ENCODE measurements at regions of chr6 and their contacts with region 1.

Region 1: GRCh38 chr6:77492530-77492929 is 29.2 kb upstream of the HTR1B start:
- DNase-seq: no peak
- ATAC-seq: no peak
- H3K4me3 ChIP-seq: no peak overlapping the region
- H3K27ac ChIP-seq: no peak overlapping the region
- H3K4me1 ChIP-seq: no peaks in the 10 kb centered on the region
- H3K27me3 ChIP-seq: no peaks in the 10 kb centered on the region
- CTCF ChIP-seq: no peak
- EP300 ChIP-seq: no peak
- POLR2A ChIP-seq: no peak
- RAD21 ChIP-seq: no peak

Region 2: DNA sequence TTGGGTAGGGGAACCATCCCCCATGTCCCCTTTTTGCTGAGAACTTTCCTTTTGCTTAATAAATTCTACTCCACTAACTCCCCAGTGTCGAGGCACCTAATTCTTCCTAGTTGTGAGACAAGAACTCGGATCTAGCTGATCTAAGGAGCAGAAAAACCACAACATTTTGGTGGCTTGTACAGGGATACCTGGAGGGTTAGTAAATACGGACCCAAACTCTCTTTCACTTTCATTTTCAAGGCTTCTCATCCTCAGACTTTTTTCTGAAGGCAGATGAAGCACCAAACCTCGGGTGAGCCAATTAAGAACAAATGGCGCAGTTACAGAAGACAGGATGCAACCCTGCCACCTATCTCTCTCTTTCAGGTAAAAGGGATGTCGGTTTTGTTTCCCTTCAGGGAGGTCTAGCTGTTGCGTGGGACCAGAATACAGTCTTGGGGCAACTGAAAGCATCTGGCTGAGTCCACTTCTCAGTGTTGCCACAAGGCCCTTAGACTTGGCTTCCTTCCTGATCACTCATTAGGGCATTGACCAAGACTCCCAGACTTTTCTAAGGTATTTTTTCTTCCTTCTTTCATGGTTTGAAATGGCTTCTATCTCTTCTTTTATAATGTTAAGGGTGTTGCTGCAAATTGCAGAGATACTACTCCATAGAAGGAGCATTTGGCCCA is 18.1 kb before region 1 on chr6:
- CTCF ChIA-PET with region 1: interaction called, 5 read pairs
- POLR2A ChIA-PET with region 1: interaction called, 4 read pairs
- RAD21 ChIA-PET with region 1: interaction called, 7 read pairs
- SMC1A ChIA-PET with region 1: interaction called, 15 read pairs
- in situ Hi-C with region 1: no loop called
- intact Hi-C with region 1: no loop called
- DNase-seq: no peak
- ATAC-seq: peak; percentile 58
- H3K4me3 ChIP-seq: 0 out of 2 replicates have a peak overlapping the region, but pooled peaks have one; percentile 24
- H3K27ac ChIP-seq: no peak overlapping the region
- H3K4me1 ChIP-seq: no peaks in the 10 kb centered on the region
- H3K27me3 ChIP-seq: no peaks in the 10 kb centered on the region; a peak in 1 of 4 replicates
- CTCF ChIP-seq: no peak
- EP300 ChIP-seq: no peak
- POLR2A ChIP-seq: no peak
- RAD21 ChIP-seq: no peak

Measured in GM12878 (cell line).